ENCODE measurements at regions of chr6 and their contacts with region 1.

Region 1: DNA sequence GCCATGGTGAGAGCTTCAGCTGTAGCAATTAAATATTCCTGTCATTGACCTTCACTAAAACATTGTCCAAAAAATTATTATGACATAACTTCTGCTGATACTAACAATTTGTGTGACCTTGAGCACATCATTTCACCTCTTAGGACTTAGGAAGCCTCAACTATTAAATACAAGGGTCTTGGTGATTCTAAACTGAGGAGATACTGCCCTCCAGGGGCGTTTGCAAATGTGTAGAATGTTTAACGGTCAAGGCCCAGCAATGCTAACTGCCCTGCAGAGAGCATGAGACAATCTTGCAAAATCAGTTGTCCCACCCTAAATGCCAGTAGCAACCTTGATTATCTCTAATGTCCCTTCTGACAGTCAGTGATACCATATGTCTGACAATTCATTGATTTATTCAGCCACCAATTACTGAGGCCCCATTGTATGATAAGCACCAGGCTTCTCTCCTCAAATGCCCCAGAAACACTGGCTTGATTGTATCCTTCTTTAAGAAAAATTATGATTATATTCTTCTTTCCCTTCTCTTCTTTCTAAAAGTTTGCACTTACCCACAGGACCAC is 284.1 kb upstream of the PLN start:
- DNase-seq: no peak

Region 2: DNA sequence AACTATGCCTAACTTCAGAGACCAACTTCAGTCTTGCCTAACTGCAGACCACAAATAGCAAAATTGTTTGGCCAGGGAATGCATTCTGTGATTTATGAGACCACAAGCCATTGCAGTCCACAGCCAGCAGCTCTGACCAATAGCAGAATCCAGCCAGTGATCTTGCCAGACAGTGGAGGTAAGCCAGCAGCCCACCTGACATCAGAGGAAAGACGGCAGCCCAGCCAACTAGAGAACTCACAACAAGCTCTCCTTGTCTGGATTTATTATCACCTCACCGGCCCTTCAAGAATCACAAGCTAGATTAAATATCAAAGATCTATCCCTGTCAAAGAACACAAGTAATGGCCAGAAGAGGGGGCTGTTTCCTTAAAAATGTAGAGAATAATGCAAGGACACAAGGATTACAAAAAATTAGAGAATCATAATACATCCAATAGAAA is 423.4 kb before region 1 on chr6:
- intact Hi-C with region 1: loop called (anchors 10 kb)
- DNase-seq: no peak

Region 3: GRCh38 chr6:117976030-117976651 is 287.9 kb before region 1 on chr6:
- intact Hi-C with region 1: loop called (anchors 5 kb)
- DNase-seq: no peak